GM10248 (cell line): ENCODE measurements at regions of chr1 and their contacts with region 1.

Region 1: GRCh38 chr1:206551986-206552326 is 44.6 kb downstream of the RASSF5 start:
- DNase-seq: no peak
- CTCF ChIP-seq: no peak

Region 2: DNA sequence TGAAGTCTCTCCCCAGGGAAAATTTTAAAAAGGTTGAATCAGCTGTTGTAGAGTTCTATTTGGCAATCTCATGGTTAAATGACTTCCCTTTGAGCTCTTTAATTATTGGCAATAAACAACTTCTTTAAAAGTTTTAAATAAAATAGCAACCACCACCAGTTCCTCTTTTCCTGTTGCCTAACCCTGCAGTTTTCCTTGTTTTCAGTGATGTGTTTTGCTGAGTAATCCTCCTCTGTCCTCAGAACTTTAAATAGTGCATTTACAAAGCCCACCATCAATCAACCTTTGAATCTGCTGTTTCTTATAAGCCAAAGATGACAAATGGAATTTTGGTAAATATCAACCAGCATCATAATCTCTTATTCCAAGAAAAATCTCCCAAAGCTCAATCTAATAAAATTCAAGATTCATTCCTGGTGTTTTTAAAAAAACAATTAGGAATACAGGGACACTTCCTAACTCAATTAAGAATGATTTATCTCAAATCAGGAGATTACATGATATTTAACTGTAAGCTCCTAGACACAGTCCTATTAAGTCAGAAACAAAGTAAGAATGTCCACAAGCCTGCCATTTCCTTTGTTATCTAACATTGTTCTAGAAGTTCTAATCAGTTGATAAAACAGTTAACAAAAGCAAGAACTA is 449.5 kb before region 1 on chr1:
- CTCF ChIA-PET with region 1: no interaction called
- POLR2A ChIA-PET with region 1: no interaction called
- DNase-seq: no peak
- CTCF ChIP-seq: no peak

Region 3: GRCh38 chr1:206445116-206445515 is 106.8 kb before region 1 on chr1:
- CTCF ChIA-PET with region 1: no interaction called
- POLR2A ChIA-PET with region 1: no interaction called
- DNase-seq: no peak
- CTCF ChIP-seq: no peak

Region 4: DNA sequence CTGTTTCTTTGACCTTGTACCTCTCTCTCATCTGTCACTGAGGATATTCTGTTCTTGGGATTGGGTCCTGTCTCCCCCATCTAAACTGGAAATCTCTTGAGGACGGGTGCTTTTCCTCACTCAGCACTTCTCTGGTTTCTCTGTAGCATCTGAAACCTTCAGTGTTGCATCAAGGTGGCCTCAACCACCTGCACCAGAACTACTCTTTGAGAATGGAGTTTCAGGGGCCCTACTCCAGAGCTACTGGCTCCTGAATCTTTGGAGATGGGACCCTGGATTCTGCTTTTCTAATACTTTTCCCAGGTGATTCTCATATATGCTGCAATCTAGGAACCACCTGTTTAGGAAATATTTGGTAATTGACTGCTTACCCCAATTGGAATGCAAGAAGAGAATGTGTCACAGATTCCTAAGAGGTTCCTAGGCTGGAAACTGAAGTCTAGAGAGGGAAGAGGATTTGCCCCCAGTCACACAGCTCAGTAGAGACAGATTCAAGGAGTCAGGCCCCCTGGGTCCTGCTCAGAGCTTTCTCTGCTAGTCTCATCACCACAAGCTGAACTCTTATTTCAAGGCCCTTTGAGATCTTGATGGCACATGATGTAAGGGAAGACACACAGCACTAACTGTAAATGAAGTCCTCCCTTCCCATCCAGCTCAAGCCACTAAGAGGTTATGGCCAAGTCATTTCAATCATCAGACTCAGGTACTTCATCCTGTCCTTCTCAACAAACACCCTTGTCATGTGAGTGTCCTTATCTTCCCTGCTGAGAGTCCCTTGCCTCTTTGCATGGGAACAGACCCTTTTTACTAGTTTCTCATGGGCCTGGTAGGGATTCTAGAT is 11.6 kb after region 1 on chr1:
- CTCF ChIA-PET with region 1: interaction called, 290 read pairs
- POLR2A ChIA-PET with region 1: interaction called, 6 read pairs
- DNase-seq: no peak
- CTCF ChIP-seq: no peak